ENCODE measurements at regions of chr4 and their contacts with region 1.

Region 1: DNA sequence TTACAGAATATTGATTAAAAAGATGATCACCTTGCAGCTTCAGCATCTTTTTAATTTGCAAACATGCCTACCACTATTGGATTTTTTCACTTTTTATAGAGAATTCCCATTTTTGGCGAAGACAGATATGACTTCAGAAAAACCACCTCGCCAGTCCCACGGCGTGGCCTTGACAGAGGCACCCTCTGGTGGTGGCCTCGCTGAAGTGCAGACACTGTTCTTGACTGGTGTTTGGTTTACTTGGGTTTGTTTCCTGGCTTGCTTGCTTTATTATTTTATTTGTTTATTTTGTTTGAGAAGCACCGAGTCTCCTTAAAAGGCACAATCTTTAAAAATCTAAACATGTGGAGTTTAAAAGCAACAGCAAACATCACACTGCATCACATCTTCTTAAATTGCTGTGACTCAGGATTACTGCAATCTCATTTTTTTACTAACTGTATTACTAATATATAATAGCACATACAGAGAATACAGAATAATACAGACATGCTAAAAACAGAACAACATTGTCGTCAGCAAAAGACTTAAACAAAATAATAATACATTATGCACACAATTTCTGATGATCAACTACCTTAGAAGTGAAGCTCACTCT is 13.1 kb upstream of the AMTN start:
- DNase-seq: no peak
- ATAC-seq: peak; percentile 94
- H3K4me3 ChIP-seq: no peak overlapping the region
- H3K27ac ChIP-seq: no peak overlapping the region
- H3K4me1 ChIP-seq: no peaks in the 10 kb centered on the region
- H3K27me3 ChIP-seq: no peaks in the 10 kb centered on the region
- CTCF ChIP-seq: peak; percentile 85 to 92 (median 92)
- EP300 ChIP-seq: no peak
- POLR2A ChIP-seq: no peak
- RAD21 ChIP-seq: peak; percentile 96

Region 2: DNA sequence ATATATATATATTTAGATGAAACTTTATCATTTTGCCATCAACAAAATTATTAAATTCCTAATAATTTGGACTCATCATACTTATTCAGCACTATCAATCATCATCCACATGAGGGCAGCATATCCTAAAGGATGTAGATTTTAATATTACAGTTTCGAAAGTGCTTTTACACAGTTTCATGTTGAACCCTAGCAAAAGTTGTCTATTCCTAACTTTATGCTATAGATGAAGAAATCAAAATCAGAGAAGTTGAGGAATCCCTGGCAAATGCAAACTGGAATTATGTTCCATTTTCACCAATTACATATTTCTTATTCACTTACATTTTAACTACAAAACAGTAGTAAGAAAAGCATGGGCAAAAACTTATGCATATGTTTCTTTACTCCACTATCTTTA is 815.7 kb before region 1 on chr4:
- CTCF ChIA-PET with region 1: interaction called, 4 read pairs
- POLR2A ChIA-PET with region 1: no interaction called
- RAD21 ChIA-PET with region 1: no interaction called
- SMC1A ChIA-PET with region 1: no interaction called
- in situ Hi-C with region 1: loop called (anchors 25 kb)
- intact Hi-C with region 1: loop called (anchors 2 kb)
- DNase-seq: no peak
- ATAC-seq: peak; percentile 44; the same call in 1 of the 3 replicates
- H3K4me3 ChIP-seq: no peak overlapping the region
- H3K27ac ChIP-seq: no peak overlapping the region
- H3K4me1 ChIP-seq: no peaks in the 10 kb centered on the region
- H3K27me3 ChIP-seq: no peaks in the 10 kb centered on the region
- CTCF ChIP-seq: peak; percentile 21 to 61 (median 39); a peak in 3 of 6 replicates
- EP300 ChIP-seq: no peak
- POLR2A ChIP-seq: no peak
- RAD21 ChIP-seq: peak; percentile 85

Region 3: DNA sequence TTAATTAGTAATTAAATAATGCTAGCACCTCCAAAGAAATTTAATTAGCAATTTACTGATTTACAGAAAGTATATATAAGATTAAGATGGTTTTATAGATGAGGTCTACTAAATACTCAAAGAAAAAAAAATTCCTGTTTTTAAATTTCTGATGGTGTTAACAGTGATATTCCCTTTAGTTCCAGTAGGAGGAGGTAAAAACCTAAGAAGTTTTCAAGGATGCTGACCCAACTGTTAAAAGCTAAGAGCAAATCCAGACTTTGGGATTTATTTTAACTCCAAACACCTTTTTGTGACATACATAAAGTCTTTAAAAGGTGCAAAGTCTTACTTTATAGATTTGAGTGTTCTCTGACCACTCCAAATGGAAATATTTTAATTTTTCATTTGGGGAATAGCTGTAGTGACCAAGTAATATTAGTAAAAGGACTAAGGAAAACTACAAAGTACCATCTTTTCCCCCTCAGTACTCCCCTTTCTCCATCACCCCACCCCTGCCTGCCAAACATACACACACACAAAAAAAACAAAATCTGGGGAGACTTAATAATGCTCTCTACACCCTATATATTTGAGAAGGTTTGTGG is 608.6 kb before region 1 on chr4:
- CTCF ChIA-PET with region 1: interaction called, 4 read pairs
- POLR2A ChIA-PET with region 1: no interaction called
- RAD21 ChIA-PET with region 1: no interaction called
- SMC1A ChIA-PET with region 1: interaction called, 3 read pairs
- in situ Hi-C with region 1: no loop called
- intact Hi-C with region 1: loop called (anchors 5 kb)
- DNase-seq: no peak
- ATAC-seq: no peak
- H3K4me3 ChIP-seq: no peak overlapping the region
- H3K27ac ChIP-seq: no peak overlapping the region
- H3K4me1 ChIP-seq: no peaks in the 10 kb centered on the region
- H3K27me3 ChIP-seq: no peaks in the 10 kb centered on the region
- CTCF ChIP-seq: peak; percentile 19 to 44 (median 34); a peak in 3 of 6 replicates
- EP300 ChIP-seq: no peak
- POLR2A ChIP-seq: no peak
- RAD21 ChIP-seq: peak; percentile 68

Region 4: DNA sequence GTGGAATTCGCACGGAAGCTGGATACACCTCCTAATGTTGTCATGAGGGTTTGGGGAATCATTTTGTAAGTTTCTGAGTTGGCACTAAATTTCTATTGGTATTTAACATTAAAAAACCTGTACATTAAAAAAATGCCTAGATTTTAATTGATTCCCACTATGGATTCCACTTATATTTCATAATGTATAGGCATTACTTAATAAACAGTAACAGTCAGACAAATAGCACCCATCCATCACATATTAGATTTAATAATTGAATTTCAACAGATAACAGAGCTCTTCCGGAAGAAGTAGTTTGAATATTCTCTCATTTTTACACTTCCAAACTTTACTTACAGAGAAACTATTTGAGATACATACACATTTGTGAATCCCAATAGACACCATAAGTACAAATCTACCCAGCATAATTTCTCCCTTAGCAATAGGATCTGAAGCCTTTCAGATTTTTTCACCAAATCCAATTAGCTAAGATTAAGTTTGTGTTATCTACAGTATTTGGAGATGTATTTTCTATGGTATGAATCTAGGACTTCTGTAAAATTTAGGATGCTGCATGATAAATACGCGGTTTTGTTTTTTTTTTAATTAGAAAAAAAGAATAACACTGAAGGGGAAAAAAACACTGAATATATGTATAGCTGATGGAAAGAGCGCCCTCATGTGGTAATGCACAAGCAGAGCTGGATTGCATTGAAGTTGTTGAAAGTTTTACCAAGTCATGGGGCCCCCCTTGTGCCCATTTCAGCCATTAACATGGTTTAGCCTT is 321.9 kb before region 1 on chr4:
- CTCF ChIA-PET with region 1: interaction called, 4 read pairs
- POLR2A ChIA-PET with region 1: no interaction called
- RAD21 ChIA-PET with region 1: interaction called, 4 read pairs
- SMC1A ChIA-PET with region 1: interaction called, 7 read pairs
- in situ Hi-C with region 1: no loop called
- intact Hi-C with region 1: loop called (anchors 2 kb)
- DNase-seq: no peak
- ATAC-seq: peak; percentile 93
- H3K4me3 ChIP-seq: no peak overlapping the region
- H3K27ac ChIP-seq: no peak overlapping the region
- H3K4me1 ChIP-seq: no peaks in the 10 kb centered on the region
- H3K27me3 ChIP-seq: no peaks in the 10 kb centered on the region
- CTCF ChIP-seq: peak; percentile 62 to 74 (median 73)
- EP300 ChIP-seq: no peak
- POLR2A ChIP-seq: no peak
- RAD21 ChIP-seq: peak; percentile 75

Region 5: GRCh38 chr4:70315928-70316327 is 189.3 kb before region 1 on chr4:
- CTCF ChIA-PET with region 1: interaction called, 80 read pairs
- POLR2A ChIA-PET with region 1: no interaction called
- RAD21 ChIA-PET with region 1: interaction called, 10 read pairs
- SMC1A ChIA-PET with region 1: interaction called, 12 read pairs
- in situ Hi-C with region 1: no loop called
- intact Hi-C with region 1: loop called (anchors 1 kb)
- DNase-seq: no peak
- ATAC-seq: peak; percentile 84
- H3K4me3 ChIP-seq: no peak overlapping the region
- H3K27ac ChIP-seq: no peak overlapping the region
- H3K4me1 ChIP-seq: no peaks in the 10 kb centered on the region
- H3K27me3 ChIP-seq: no peaks in the 10 kb centered on the region
- CTCF ChIP-seq: peak; percentile 26 to 49 (median 28); a peak in 3 of 6 replicates
- EP300 ChIP-seq: no peak
- POLR2A ChIP-seq: no peak
- RAD21 ChIP-seq: peak; percentile 42

Region 6: GRCh38 chr4:70405765-70406164 is 99.5 kb before region 1 on chr4:
- CTCF ChIA-PET with region 1: no interaction called
- POLR2A ChIA-PET with region 1: no interaction called
- RAD21 ChIA-PET with region 1: interaction called, 3 read pairs
- SMC1A ChIA-PET with region 1: interaction called, 3 read pairs
- in situ Hi-C with region 1: no loop called
- intact Hi-C with region 1: loop called (anchors 5 kb)
- DNase-seq: no peak
- ATAC-seq: peak; percentile 71
- H3K4me3 ChIP-seq: no peak overlapping the region
- H3K27ac ChIP-seq: no peak overlapping the region
- H3K4me1 ChIP-seq: no peaks in the 10 kb centered on the region
- H3K27me3 ChIP-seq: no peaks in the 10 kb centered on the region
- CTCF ChIP-seq: no peak
- EP300 ChIP-seq: peak; percentile 84 to 90; a peak in 3 of 4 replicates
- POLR2A ChIP-seq: no peak
- RAD21 ChIP-seq: no peak

Region 7: DNA sequence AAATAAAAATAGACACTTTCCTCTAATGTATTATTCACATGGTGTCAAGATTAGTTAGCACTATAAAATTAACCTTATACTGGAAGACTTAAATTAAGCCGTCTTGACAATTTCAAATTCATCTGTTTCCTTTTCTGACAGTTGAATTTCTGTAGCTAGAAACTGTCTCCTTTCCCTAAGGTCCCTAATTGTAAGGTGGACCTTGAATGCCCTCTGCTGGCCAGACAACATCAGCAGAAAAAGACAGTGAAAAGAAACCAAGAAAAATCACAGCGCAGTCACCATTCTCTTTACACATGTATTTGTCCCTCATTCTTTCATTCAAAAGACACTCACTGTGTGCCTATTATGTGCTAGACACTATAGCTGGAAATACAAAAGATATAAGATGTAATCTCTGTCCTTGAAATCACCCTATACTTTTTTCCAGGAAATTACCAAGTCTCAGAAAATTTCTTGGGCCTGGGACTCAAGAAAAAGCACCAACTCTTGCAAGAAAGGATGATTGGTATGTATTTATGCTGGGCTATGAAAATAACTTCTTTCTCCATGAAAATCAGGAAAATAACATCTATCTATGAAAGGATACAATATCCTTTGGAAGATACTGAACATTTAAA is 54.1 kb after region 1 on chr4:
- CTCF ChIA-PET with region 1: interaction called, 7 read pairs
- POLR2A ChIA-PET with region 1: no interaction called
- RAD21 ChIA-PET with region 1: interaction called, 3 read pairs
- SMC1A ChIA-PET with region 1: interaction called, 3 read pairs
- in situ Hi-C with region 1: no loop called
- intact Hi-C with region 1: loop called (anchors 2 kb)
- DNase-seq: no peak
- ATAC-seq: peak; percentile 84
- H3K4me3 ChIP-seq: no peak overlapping the region
- H3K27ac ChIP-seq: no peak overlapping the region
- H3K4me1 ChIP-seq: no peaks in the 10 kb centered on the region
- H3K27me3 ChIP-seq: no peaks in the 10 kb centered on the region
- CTCF ChIP-seq: peak; percentile 62 to 67 (median 67)
- EP300 ChIP-seq: no peak
- POLR2A ChIP-seq: no peak
- RAD21 ChIP-seq: peak; percentile 82